ENCODE measurements at regions of chr12 and their contacts with region 1.

Region 1: GRCh38 chr12:47079981-47080791 is 427 bp upstream of the AMIGO2 start:
- DNase-seq: peak; percentile 83
- H3K4me3 ChIP-seq: peak overlapping the region; percentile 84 to 93 (median 90)
- H3K27ac ChIP-seq: peak overlapping the region; percentile 86 to 99 (median 96)
- H3K4me1 ChIP-seq: peaks cover 0 to 63% (median 42%) of the 10 kb centered on the region in 4 donors
- H3K27me3 ChIP-seq: no peaks in the 10 kb centered on the region
- CTCF ChIP-seq: no peak
- EP300 ChIP-seq: no peak
- POLR2A ChIP-seq: no peak

Region 2: DNA sequence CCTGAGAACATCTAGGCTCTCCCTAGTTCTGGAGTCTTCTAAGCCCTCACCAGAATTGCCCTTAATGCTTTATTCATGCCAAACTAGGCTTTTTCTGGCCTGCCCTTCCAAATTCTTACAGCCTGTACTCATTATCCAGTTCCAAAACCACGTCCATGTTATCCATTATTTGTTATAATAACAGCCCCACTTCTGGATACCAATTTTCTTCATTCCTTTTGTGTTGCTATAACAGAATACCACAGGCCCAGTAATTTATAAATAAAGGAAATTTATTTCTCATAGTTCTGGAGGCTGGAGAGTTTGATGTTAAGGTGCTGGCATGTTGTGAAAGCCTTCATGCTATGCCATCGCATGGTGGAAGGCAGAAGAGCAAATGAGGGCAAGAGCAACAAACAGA is 67.6 kb after region 1 on chr12:
- intact Hi-C with region 1: no loop called
- DNase-seq: no peak
- H3K4me3 ChIP-seq: no peak overlapping the region
- H3K27ac ChIP-seq: peak overlapping the region in 2 of 4 donors; percentile 7 to 15
- H3K4me1 ChIP-seq: peaks cover 0 to 6% (median 3%) of the 10 kb centered on the region in 4 donors
- H3K27me3 ChIP-seq: no peaks in the 10 kb centered on the region
- CTCF ChIP-seq: no peak
- EP300 ChIP-seq: no peak
- POLR2A ChIP-seq: no peak

Region 3: DNA sequence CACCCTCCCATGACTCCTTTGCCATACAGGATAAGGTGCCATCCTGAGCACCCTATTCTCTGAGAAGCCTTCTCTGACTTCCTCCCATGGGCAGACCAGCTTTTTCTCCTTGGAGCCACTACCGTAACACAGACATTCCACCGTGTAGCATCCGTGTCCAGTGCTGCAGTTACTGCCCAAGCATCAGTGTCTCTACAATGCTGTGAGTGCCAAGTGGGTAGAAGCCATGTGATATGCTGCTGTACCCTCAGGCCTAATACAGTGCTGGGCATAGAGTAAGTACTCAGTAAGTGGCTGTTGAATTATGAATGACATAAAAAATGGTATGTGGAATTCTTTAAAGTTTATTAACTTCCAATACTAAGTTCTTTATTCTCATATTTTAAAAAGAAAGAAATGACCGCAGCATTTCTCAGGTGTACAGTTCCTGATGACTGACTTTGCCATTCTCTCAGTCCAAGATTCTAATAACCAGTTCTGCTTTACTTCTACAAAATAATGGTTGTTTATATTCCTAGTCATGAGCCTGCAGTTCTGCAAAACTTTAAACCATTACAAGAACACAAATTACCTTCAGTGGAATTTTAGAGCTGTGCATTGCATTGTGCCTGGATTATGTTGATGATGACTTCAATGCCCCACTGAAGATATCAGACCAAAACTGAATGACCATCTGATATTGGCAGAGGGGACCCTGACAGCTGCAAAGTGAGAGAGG is 506.9 kb after region 1 on chr12:
- intact Hi-C with region 1: loop called (anchors 5 kb)
- DNase-seq: peak; percentile 74
- H3K4me3 ChIP-seq: no peak overlapping the region
- H3K27ac ChIP-seq: peak overlapping the region in 3 of 4 donors; percentile 74 to 83 (median 79)
- H3K4me1 ChIP-seq: peaks cover 3 to 80% (median 75%) of the 10 kb centered on the region in 4 donors
- H3K27me3 ChIP-seq: no peaks in the 10 kb centered on the region
- CTCF ChIP-seq: no peak
- EP300 ChIP-seq: peak; percentile 26 to 75 (median 70)
- POLR2A ChIP-seq: no peak

Region 4: GRCh38 chr12:47819896-47820630 is 739.9 kb after region 1 on chr12 and contains the start of gene HDAC7:
- intact Hi-C with region 1: loop called (anchors 10 kb)
- DNase-seq: peak; percentile 96
- H3K4me3 ChIP-seq: peak within 1 kb of the TSS; percentile 64 to 84 (median 81)
- H3K27ac ChIP-seq: peak within 1 kb of the TSS; percentile 98 to 99 (median 99)
- H3K4me1 ChIP-seq: peaks cover 2 to 87% (median 82%) of the 10 kb centered on the region in 4 donors
- H3K27me3 ChIP-seq: no peaks in the 10 kb centered on the region
- CTCF ChIP-seq: no peak
- EP300 ChIP-seq: no peak
- POLR2A ChIP-seq: no peak
- total RNA-seq, gene HDAC7: 45.3 to 79.2 (median 53.1) TPM